ENCODE measurements at regions of chr11 and their contacts with region 1.

Region 1: DNA sequence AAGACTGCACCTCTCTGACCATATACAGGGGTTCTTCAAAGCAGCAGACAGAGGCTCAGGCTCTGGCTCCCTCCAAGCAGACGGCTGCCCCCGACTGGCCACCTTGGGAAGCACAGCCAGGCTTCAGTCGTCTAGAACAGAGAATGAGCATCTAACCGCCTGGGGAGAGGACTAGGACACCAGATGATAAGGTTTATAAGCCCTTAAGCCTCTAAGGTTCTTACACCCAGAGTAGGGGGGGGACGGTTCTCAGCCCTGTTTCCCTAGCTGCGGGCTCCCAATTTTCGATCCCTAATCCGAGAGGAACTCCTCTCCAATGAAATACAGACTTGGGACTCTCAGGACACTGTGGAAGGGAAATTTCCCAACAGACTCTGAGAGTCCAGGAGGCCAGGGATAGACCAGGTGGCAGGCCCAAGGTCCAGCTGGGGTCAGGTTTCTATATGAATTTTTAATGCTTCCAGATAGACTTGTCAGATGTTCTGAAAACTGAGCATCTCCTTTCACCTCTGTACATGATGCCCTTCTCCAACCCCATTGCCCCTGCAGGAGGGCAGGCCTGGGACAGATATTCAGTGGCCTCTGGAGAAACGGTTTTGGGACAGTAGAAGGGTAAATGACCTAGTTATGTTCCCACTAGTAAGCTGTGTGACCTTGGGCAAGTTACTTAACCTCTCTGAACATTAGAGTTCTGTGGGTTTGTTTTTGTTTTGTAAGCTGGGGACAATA is 20.2 kb downstream of the RTN4RL2 start:
- DNase-seq: no peak
- H3K4me3 ChIP-seq: no peak overlapping the region
- H3K27me3 ChIP-seq: peaks cover 14% of the 10 kb centered on the region
- CTCF ChIP-seq: peak; percentile 75

Region 2: DNA sequence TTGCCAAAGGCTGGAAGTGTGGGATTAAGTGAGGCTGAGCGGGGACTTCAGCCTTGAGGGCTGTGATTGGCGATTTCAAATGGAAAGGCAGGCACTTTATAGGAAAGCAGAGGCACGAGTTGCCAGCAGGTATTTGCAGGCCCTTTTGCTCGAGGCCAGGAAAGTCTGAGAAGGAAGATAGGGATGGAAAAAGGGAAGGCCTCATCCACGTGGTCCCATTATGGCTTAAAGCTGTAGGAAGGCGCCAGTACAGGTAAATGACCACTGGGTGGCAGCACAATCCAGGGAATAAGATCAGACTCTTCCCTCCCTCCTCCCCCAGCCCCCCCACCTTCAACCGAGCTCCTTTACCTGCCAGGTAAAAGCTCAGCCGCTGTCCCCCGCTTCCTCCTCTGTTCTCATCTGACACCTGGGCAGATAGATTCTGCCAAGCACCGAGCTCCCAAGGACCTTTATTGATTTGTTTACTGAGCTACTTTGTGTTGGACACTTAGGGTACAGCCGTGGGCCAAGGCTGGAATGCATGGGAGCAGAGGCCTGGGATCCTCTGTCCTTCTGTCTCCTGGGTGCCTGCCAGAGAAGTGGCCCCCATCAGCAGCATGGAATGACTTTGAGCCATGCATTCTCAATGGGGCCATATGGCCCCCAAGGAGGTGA is 134.9 kb before region 1 on chr11:
- CTCF ChIA-PET with region 1: interaction called, 30 read pairs
- POLR2A ChIA-PET with region 1: no interaction called
- DNase-seq: no peak
- H3K4me3 ChIP-seq: no peak overlapping the region
- H3K27me3 ChIP-seq: no peaks in the 10 kb centered on the region; the same call in 1 of the 2 replicates
- CTCF ChIP-seq: peak; percentile 72

Region 3: DNA sequence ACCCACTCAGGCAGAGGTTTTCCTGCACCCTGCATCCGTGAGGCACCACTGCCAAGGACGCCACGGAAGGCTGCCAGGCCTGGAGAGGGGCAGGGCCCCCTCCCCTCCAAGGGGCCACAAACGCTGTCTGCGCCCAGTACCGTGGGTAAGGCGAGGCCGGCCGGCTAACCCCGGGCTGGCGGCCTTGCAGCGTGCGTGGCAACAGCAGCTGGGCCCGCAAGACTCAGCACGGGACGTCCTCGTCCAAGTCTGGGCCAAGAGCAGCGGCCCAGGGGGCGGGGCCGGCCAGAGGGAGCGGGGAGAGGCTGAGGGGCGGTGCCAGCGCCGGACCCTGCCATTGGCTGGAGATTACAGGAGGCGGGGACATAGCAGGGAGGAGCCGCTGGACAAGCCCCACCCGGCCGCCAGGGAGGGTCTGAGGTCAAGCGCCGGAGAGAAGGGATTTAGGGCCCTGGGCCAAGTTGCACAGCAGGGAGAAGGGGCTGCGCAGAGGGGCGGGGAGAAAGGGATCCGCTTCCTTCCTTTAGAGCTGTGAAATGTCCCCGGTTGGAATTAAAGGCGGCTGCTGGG is 18.9 kb after region 1 on chr11:
- CTCF ChIA-PET with region 1: interaction called, 169 read pairs
- POLR2A ChIA-PET with region 1: no interaction called
- DNase-seq: peak; percentile 52
- H3K4me3 ChIP-seq: no peak overlapping the region
- H3K27me3 ChIP-seq: no peaks in the 10 kb centered on the region
- CTCF ChIP-seq: no peak

Region 4: DNA sequence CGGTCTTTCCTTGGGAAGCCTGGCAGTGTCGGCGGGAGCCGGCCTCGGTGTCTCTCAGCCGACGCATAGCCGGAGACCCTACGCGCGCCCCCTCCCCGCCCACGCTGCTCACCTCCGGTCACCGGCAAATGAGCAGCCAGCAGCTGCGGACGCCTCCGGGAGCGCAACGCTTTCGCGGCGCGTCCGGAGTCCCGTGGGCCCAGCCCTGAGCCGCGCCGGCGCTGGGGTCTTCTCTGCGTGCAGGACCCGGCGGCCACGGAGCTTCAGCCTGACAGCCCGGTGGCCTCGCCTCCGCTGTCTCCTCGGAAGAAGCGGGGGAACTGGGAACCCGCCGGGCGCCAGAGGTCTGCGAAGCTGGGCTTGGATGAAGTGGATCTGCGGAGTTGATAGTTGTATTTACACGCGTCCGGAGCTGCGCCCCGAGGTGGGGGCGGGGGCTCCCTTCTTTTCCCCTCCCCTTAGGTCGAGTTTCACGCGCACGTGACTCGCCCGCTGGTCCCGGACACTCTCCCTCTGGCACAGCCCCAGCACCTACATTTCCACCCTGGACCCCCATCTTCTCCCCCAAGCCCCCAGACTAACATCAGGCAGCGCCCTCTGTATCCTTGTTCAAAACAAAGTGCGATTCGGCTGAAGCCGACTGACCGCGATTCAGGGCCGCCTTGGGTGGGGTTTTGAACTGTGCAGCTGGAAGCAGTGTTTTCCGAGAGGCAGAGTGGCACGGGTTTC is 34.9 kb after region 1 on chr11 and contains the start of gene SLC43A1:
- CTCF ChIA-PET with region 1: interaction called, 20 read pairs
- POLR2A ChIA-PET with region 1: no interaction called
- DNase-seq: no peak
- H3K4me3 ChIP-seq: peak within 1 kb of the TSS; percentile 79
- H3K27me3 ChIP-seq: no peaks in the 10 kb centered on the region
- CTCF ChIP-seq: no peak; the same call in 1 of the 2 replicates
- polyA plus RNA-seq, gene SLC43A1: 11.8 and 23.4 TPM in 2 replicates

Region 5: GRCh38 chr11:57597916-57598830 is 117.6 kb after region 1 on chr11:
- CTCF ChIA-PET with region 1: no interaction called
- POLR2A ChIA-PET with region 1: no interaction called
- DNase-seq: no peak
- H3K4me3 ChIP-seq: peak overlapping the region; percentile 60
- H3K27me3 ChIP-seq: 0 out of 2 replicates have a peak, but pooled peaks cover 3% of the 10 kb centered on the region
- CTCF ChIP-seq: no peak

Measured in BJ (cell line).